HepG2 (cell line): ENCODE measurements at regions of chr2 and their contacts with region 1.

Region 1: GRCh38 chr2:237691908-237692600 is 64.7 kb downstream of the LRRFIP1 start:
- DNase-seq: peak; percentile 69
- ATAC-seq: peak; percentile 88
- H3K4me3 ChIP-seq: peak overlapping the region; percentile 86 to 92 (median 88)
- H3K27ac ChIP-seq: peak overlapping the region; percentile 67
- H3K4me1 ChIP-seq: peaks cover 71% of the 10 kb centered on the region
- H3K27me3 ChIP-seq: no peaks in the 10 kb centered on the region; a peak in 1 of 5 replicates
- CTCF ChIP-seq: no peak; the same call in 1 of the 2 replicates
- EP300 ChIP-seq: no peak
- POLR2A ChIP-seq: no peak; a peak in 1 of 4 replicates
- RAD21 ChIP-seq: peak; percentile 64

Region 2: GRCh38 chr2:237529452-237530402 is 162.3 kb before region 1 on chr2:
- CTCF ChIA-PET with region 1: no interaction called
- POLR2A ChIA-PET with region 1: no interaction called
- in situ Hi-C with region 1: no loop called
- intact Hi-C with region 1: no loop called
- DNase-seq: no peak
- ATAC-seq: no peak
- H3K4me3 ChIP-seq: no peak overlapping the region
- H3K27ac ChIP-seq: no peak overlapping the region
- H3K4me1 ChIP-seq: peaks cover 4% of the 10 kb centered on the region
- H3K27me3 ChIP-seq: peaks cover 11 to 58% of the 10 kb centered on the region in 2 experiments; a peak in 4 of 5 replicates
- CTCF ChIP-seq: no peak
- EP300 ChIP-seq: no peak
- POLR2A ChIP-seq: no peak
- RAD21 ChIP-seq: no peak

Region 3: DNA sequence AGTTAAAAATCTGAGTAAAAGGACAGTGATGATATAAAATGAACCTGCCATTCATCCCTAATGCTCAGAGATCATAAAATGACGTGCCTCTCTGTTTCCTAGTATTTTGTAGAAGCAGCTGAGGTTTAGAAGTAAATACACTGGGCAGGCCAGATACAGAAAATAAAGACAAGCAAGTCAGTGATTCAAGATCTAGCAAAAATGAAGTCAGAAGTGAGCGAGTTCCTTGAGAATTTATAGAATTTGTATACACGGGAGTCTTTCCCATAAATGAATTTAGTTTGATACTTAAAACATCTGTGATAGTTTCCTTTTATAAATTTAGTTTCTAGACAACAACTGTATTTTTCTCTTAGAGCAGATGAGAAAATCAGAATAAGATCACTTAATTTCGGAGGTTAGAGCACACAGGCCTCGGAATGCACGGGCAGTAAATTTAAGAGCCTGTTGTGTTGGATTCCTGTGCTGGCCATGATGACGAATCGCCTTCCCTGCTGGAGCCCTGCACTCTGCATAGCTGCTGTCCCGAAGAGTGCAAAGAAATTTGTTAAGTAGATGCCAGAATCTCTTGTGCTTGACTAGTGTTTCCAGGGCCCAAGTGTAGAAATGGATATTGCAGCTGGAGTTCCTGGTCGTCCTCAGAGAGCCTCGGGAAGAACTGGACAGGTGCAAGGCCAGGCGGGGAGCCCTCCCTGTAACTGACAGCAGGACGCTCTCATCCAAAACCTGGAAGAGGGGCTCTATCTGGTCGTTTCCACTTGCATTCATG is 22.8 kb after region 1 on chr2:
- CTCF ChIA-PET with region 1: no interaction called
- POLR2A ChIA-PET with region 1: interaction called, 11 read pairs
- in situ Hi-C with region 1: no loop called
- intact Hi-C with region 1: loop called (anchors 1 kb)
- DNase-seq: peak; percentile 35
- ATAC-seq: peak; percentile 77
- H3K4me3 ChIP-seq: peak overlapping the region; percentile 52 to 72 (median 61)
- H3K27ac ChIP-seq: peak overlapping the region; percentile 77
- H3K4me1 ChIP-seq: peaks cover 50% of the 10 kb centered on the region
- H3K27me3 ChIP-seq: no peaks in the 10 kb centered on the region
- CTCF ChIP-seq: no peak
- EP300 ChIP-seq: no peak
- POLR2A ChIP-seq: no peak
- RAD21 ChIP-seq: no peak